HEK293T (cell line): ENCODE measurements at regions of chr17 and their contacts with region 1.

Region 1: GRCh38 chr17:57861000-57861789 is 11.4 kb upstream of the MRPS23 start:
- DNase-seq: no peak

Region 2: GRCh38 chr17:57823469-57824401 is 37.5 kb before region 1 on chr17:
- CTCF ChIA-PET with region 1: no interaction called
- POLR2A ChIA-PET with region 1: no interaction called
- DNase-seq: peak; percentile 59

Region 3: DNA sequence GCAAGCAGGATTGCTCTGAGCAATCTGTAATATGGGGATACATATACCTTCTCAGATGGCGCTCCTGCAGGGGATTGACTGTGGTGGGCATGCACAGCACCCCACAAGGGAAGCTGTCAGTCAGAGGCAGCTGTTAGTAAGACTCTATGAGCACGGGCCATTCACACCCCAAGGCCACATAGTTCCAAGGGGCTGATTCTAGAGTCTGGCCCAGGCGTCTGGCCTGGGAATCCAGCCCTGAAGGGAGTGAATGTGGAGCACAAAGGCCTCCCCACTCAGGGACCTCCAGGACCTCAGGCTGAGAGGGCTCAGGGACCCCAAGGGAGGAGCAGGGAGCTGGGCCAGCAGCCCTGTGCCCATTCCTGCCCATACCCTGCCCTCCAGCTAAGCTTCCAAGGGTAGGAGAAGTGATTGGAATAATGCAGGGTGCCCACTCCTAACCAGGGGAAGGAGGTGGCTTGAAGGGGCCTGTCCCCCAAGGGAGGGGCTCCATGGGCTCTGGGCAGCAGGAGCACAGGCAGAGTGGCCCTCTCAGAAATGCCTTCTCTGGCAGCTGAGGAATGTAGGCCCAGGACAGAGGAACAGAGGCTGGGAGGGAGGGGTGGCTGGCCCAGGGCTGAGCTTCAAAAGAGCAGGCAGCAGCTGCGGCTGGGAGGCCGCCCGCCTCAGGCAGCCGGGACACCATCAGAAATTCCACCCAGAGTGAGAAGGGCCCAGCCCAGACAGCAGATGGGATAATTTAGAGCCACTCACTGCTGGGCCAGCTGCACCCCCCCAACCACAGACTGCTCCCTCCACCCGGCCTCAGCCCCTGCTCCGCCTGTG is 37.5 kb after region 1 on chr17:
- CTCF ChIA-PET with region 1: no interaction called
- POLR2A ChIA-PET with region 1: no interaction called
- DNase-seq: no peak

Region 4: DNA sequence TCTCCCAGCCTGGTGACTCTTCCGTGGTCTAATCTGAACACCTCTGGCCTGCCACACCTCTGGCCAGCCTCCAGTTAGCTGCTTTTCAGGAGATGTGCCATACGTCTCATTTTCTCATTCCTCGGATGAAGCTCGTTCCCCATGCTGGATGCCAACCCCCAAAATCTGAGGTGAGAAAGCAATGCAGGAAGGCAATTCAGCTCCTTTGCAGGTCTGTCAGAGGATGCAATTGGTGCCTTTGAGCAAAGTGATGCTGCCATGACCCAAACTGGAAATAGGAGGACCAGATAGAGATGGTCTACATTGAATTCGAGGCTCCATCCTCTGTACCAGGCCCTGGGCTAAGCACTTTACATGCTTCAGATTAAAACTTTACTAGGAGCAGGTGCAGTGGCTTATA is 105.1 kb after region 1 on chr17:
- CTCF ChIA-PET with region 1: no interaction called
- POLR2A ChIA-PET with region 1: no interaction called
- DNase-seq: no peak

Region 5: DNA sequence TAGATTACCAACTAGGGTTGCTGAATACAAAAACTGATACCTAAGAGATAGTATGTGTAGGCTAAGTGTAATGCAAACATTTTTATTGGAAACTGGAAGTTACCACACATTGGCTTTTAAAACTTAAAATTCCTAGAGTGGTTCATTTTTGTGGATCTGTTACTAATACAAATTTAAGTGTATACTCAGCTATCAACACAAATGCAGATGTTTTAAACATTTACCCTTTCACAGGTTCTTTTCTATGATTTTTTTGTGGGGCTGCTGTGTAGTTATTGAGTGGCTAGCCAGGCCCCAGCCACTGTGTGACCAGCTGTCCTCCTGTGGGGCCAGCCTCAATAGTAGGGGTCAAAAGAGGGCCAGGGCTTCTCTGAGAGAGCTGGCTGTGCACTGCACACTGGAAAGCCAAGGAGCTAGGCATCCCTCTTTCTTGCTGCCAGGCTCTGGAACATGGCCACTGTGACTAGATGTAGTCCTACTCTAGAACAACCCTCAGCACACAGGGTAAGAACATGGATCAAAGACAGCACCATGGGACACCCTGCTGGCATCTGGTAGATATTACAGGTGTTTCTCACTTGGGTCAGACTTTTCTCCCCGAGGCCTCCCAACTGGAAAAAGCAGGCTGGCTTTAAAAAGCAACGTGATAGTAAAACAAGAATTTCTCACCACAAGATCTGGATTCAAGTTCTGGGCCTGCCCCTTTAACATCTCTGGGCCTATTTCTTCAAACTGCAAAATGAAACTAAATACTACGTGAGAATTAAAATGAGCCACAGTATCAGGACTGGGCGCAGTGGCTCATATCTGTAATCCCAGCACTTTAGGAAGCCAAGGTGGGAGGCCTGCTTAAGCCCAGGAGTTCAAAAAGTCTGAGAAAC is 134.1 kb after region 1 on chr17:
- CTCF ChIA-PET with region 1: interaction called, 84 read pairs
- POLR2A ChIA-PET with region 1: interaction called, 8 read pairs
- DNase-seq: peak; percentile 66

Region 6: GRCh38 chr17:58052945-58053846 is 192.0 kb after region 1 on chr17:
- CTCF ChIA-PET with region 1: no interaction called
- POLR2A ChIA-PET with region 1: no interaction called
- DNase-seq: no peak

Region 7: GRCh38 chr17:58112970-58113631 is 251.9 kb after region 1 on chr17:
- CTCF ChIA-PET with region 1: interaction called, 13 read pairs
- POLR2A ChIA-PET with region 1: no interaction called
- DNase-seq: peak; percentile 78